ENCODE measurements at regions of chr18 and their contacts with region 1.

Region 1: DNA sequence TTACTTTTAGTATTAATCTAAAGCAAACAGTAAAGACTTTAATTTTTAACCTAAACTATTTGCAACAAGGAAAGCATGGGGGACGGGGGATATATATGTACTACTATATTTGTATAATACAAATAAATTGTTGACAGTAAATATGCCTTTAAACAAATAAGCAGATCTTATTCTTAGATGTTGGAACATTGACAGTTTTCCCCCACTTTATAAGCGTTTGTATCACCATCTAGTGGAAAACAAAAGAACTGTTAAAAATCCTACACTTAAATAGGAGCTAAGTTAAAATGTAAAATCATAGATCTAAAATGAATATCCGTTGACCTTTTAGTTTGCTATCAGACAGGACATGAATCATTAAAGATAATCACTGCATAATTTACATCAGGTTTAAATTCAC is 50.0 kb downstream of the RBBP8 start:
- DNase-seq: no peak
- H3K4me3 Mint-ChIP-seq: no peak overlapping the region
- H3K27ac Mint-ChIP-seq: no peak overlapping the region
- H3K4me1 Mint-ChIP-seq: peaks cover 25% of the 10 kb centered on the region
- H3K27me3 Mint-ChIP-seq: no peaks in the 10 kb centered on the region
- CTCF ChIP-seq: peak; percentile 34

Region 2: DNA sequence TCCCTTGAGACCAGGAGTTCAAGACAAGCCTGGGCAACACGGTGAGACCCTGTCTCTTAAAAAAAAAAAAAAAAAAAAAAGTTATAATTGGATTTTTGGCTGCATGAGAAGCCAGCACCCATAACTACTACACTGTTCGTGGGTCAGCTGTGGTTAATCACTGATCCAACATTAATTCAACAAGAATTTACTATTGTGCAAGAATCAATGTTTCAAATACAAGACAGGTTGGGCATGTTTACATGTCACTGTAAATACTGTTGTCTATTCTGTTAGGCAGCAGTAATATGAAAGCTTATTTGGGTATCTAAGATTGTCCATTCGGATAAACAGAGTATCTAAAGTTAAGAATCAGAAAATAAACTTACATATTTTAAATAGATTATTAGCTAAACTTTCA is 1444.9 kb before region 1 on chr18:
- CTCF ChIA-PET with region 1: no interaction called
- intact Hi-C with region 1: no loop called
- DNase-seq: no peak
- H3K4me3 Mint-ChIP-seq: no peak overlapping the region
- H3K27ac Mint-ChIP-seq: no peak overlapping the region
- H3K4me1 Mint-ChIP-seq: no peaks in the 10 kb centered on the region
- H3K27me3 Mint-ChIP-seq: no peaks in the 10 kb centered on the region
- CTCF ChIP-seq: no peak

Region 3: GRCh38 chr18:22800551-22800951 is 182.6 kb before region 1 on chr18:
- CTCF ChIA-PET with region 1: interaction called, 18 read pairs
- intact Hi-C with region 1: loop called (anchors 5 kb)
- DNase-seq: no peak
- H3K4me3 Mint-ChIP-seq: no peak overlapping the region
- H3K27ac Mint-ChIP-seq: no peak overlapping the region
- H3K4me1 Mint-ChIP-seq: peaks cover 6% of the 10 kb centered on the region
- H3K27me3 Mint-ChIP-seq: no peaks in the 10 kb centered on the region
- CTCF ChIP-seq: no peak

Region 4: GRCh38 chr18:22813648-22814328 is 169.4 kb before region 1 on chr18:
- CTCF ChIA-PET with region 1: interaction called, 21 read pairs
- intact Hi-C with region 1: loop called (anchors 1 kb)
- DNase-seq: peak; percentile 41
- H3K4me3 Mint-ChIP-seq: no peak overlapping the region
- H3K27ac Mint-ChIP-seq: no peak overlapping the region
- H3K4me1 Mint-ChIP-seq: peaks cover 7% of the 10 kb centered on the region
- H3K27me3 Mint-ChIP-seq: peaks cover 13% of the 10 kb centered on the region
- CTCF ChIP-seq: peak; percentile 52

Region 5: GRCh38 chr18:22846088-22846683 is 137.0 kb before region 1 on chr18:
- CTCF ChIA-PET with region 1: interaction called, 5 read pairs
- intact Hi-C with region 1: loop called (anchors 1 kb)
- DNase-seq: no peak
- H3K4me3 Mint-ChIP-seq: no peak overlapping the region
- H3K27ac Mint-ChIP-seq: no peak overlapping the region
- H3K4me1 Mint-ChIP-seq: peaks cover 30% of the 10 kb centered on the region
- H3K27me3 Mint-ChIP-seq: no peaks in the 10 kb centered on the region
- CTCF ChIP-seq: peak; percentile 31

Region 6: GRCh38 chr18:23259701-23260582 is 276.8 kb after region 1 on chr18:
- CTCF ChIA-PET with region 1: no interaction called
- intact Hi-C with region 1: no loop called
- DNase-seq: peak; percentile 73
- H3K4me3 Mint-ChIP-seq: peak overlapping the region; percentile 47
- H3K27ac Mint-ChIP-seq: peak overlapping the region; percentile 69
- H3K4me1 Mint-ChIP-seq: peaks cover 30% of the 10 kb centered on the region
- H3K27me3 Mint-ChIP-seq: no peaks in the 10 kb centered on the region
- CTCF ChIP-seq: no peak